GM12878 (cell line): ENCODE measurements at regions of chr1 and their contacts with region 1.

Region 1: DNA sequence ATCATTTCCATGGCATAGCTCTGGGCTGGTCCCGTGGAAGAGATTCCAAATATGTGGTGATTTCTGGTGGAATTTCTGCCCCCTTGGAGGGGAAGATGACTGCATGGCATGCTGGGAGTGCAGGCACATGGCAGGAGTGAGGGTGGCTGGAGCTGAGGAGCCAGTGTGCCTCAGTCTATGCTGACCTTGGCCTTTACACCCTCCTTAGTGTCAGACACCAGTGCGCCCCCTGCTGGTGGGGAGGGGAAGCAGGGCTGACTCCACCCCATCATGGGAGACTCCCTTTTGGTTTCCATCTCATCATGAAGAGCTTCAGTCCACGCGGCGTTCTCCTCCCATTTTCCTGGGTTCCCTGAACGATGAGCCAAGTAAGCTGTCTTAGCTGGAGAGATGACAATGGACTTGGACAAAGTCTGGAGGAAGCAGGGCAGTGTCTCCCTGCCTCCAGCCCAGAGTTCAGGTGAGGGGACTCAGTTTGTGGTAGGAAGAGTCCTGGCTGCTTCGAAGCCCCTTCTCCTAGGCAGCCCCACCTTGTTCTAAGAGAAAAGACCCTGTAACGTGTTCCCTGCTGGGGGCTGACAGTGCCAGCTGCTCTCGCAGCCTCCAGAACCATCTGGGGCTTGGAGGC is 10.3 kb downstream of the ALX3 start:
- DNase-seq: no peak
- ATAC-seq: peak; percentile 98
- H3K4me3 ChIP-seq: no peak overlapping the region
- H3K27ac ChIP-seq: no peak overlapping the region
- H3K4me1 ChIP-seq: no peaks in the 10 kb centered on the region
- H3K27me3 ChIP-seq: no peaks in the 10 kb centered on the region
- CTCF ChIP-seq: peak; percentile 86 to 99 (median 94)
- EP300 ChIP-seq: no peak
- POLR2A ChIP-seq: peak; percentile 32; the same call in 1 of the 2 replicates
- RAD21 ChIP-seq: peak; percentile 14; the same call in 1 of the 2 replicates

Region 2: GRCh38 chr1:110076789-110077500 is 16.8 kb after region 1 on chr1:
- CTCF ChIA-PET with region 1: interaction called, 10 read pairs
- POLR2A ChIA-PET with region 1: interaction called, 3 read pairs
- RAD21 ChIA-PET with region 1: no interaction called
- SMC1A ChIA-PET with region 1: no interaction called
- in situ Hi-C with region 1: no loop called
- intact Hi-C with region 1: no loop called
- DNase-seq: no peak
- ATAC-seq: no peak
- H3K4me3 ChIP-seq: no peak overlapping the region
- H3K27ac ChIP-seq: no peak overlapping the region
- H3K4me1 ChIP-seq: no peaks in the 10 kb centered on the region
- H3K27me3 ChIP-seq: peaks cover 0 to 1% of the 10 kb centered on the region in 2 experiments; a peak in 2 of 4 replicates
- CTCF ChIP-seq: no peak
- EP300 ChIP-seq: no peak
- POLR2A ChIP-seq: no peak
- RAD21 ChIP-seq: no peak

Region 3: GRCh38 chr1:110690709-110691365 is 630.7 kb after region 1 on chr1:
- CTCF ChIA-PET with region 1: no interaction called
- POLR2A ChIA-PET with region 1: no interaction called
- RAD21 ChIA-PET with region 1: no interaction called
- SMC1A ChIA-PET with region 1: no interaction called
- in situ Hi-C with region 1: no loop called
- intact Hi-C with region 1: no loop called
- DNase-seq: no peak
- ATAC-seq: no peak
- H3K4me3 ChIP-seq: no peak overlapping the region
- H3K27ac ChIP-seq: no peak overlapping the region
- H3K4me1 ChIP-seq: no peaks in the 10 kb centered on the region
- H3K27me3 ChIP-seq: no peaks in the 10 kb centered on the region
- CTCF ChIP-seq: no peak
- EP300 ChIP-seq: no peak
- POLR2A ChIP-seq: no peak
- RAD21 ChIP-seq: no peak